ENCODE measurements at regions of chr14 and their contacts with region 1.

Region 1: DNA sequence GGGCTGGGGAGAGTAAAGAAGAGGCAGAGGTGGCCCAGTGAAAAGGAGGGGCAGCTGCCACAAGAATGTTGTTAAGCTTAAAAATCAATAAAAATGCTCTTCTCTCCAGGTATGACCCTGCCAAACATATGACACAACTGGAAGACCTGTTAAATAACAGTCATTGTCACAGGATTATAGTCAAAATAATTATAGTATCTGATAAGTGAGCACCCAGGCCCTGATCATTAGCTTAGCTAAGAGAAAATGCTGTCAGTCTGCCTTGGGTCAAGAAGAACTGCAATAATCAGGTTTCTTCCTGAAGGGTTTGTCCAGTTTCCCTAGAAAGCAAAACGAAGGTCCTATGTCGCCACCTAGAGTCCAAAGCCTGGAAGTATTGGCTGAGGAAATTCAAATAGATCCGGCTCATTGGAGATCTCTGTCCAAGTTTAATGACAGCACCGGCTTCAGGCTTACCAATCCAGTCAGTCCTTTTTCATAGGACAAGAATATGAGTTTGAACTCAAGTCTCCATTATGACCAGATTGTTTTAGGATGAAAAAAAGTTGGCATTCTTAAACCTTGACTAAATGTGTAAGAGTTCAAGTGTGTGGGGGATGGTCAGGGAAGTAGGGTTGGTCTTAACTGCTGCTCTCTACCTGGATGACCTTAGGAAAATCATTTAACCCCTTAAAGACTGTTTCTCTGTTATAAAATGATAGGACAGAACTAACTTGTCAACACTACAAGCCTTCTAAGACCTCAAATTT is 22.5 kb upstream of the NKX2-8 start:
- DNase-seq: no peak
- H3K4me3 ChIP-seq: no peak overlapping the region
- H3K27ac ChIP-seq: no peak overlapping the region
- H3K4me1 ChIP-seq: no peaks in the 10 kb centered on the region
- H3K27me3 ChIP-seq: peaks cover 0 to 15% (median 0%) of the 10 kb centered on the region in 3 donors
- CTCF ChIP-seq: peak; percentile 18 to 72 (median 52)
- EP300 ChIP-seq: no peak
- POLR2A ChIP-seq: no peak

Region 2: DNA sequence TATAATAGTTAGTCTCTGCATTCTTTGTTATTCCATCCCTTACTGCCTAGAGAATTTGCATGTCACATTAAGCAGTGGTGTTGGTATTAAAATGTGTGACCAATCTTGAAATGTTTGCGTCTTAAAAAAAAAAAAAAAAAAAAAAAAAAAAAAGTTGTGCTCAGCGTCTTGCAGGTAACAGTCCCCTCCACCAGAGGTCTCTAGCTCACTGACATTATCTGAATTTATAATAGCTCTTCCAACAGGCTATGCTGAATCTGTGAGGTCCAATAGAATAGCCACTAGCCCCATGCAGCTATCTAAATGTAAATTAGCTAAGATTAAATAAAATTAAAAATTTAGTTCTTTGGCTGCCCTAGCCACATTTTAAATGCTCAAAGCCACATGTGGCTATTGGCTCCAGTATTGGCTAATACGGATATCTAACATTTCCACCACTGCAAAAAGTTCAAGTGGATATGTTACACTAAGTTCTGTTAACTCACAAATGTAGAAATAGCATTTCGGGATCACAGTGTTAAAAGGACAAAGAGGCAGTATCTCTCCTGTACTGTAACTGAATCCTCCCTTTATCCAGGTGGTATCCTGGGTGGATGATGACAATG is 51.2 kb before region 1 on chr14:
- intact Hi-C with region 1: loop called (anchors 2 kb)
- DNase-seq: no peak
- H3K4me3 ChIP-seq: no peak overlapping the region
- H3K27ac ChIP-seq: no peak overlapping the region
- H3K4me1 ChIP-seq: no peaks in the 10 kb centered on the region
- H3K27me3 ChIP-seq: peaks cover 0 to 6% (median 0%) of the 10 kb centered on the region in 3 donors
- CTCF ChIP-seq: peak in 2 of 4 experiments; percentile 34 to 52
- EP300 ChIP-seq: no peak
- POLR2A ChIP-seq: no peak

Region 3: GRCh38 chr14:36900846-36901245 is 295.9 kb after region 1 on chr14:
- intact Hi-C with region 1: no loop called
- DNase-seq: no peak
- H3K4me3 ChIP-seq: no peak overlapping the region
- H3K27ac ChIP-seq: no peak overlapping the region
- H3K4me1 ChIP-seq: no peaks in the 10 kb centered on the region
- H3K27me3 ChIP-seq: no peaks in the 10 kb centered on the region
- CTCF ChIP-seq: no peak
- EP300 ChIP-seq: no peak
- POLR2A ChIP-seq: no peak

Measured in sigmoid colon (tissue), 7 donors.